ENCODE measurements at regions of chr2 and their contacts with region 1.

Region 1: GRCh38 chr2:136628490-136628889 is 136.9 kb upstream of the THSD7B start:
- DNase-seq: peak; percentile 27 to 38
- H3K4me3 ChIP-seq: no peak overlapping the region
- H3K4me3 Mint-ChIP-seq: peak overlapping the region; percentile 59
- H3K27ac Mint-ChIP-seq: peak overlapping the region; percentile 95
- H3K4me1 ChIP-seq: peaks cover 29% of the 10 kb centered on the region
- H3K4me1 Mint-ChIP-seq: peaks cover 29% of the 10 kb centered on the region
- H3K27me3 ChIP-seq: no peaks in the 10 kb centered on the region
- H3K27me3 Mint-ChIP-seq: no peaks in the 10 kb centered on the region
- CTCF ChIP-seq: no peak

Region 2: GRCh38 chr2:136517716-136518115 is 110.8 kb before region 1 on chr2:
- CTCF ChIA-PET with region 1: no interaction called
- POLR2A ChIA-PET with region 1: no interaction called
- intact Hi-C with region 1: no loop called
- DNase-seq: no peak
- H3K4me3 ChIP-seq: no peak overlapping the region
- H3K4me3 Mint-ChIP-seq: no peak overlapping the region
- H3K27ac Mint-ChIP-seq: no peak overlapping the region
- H3K4me1 ChIP-seq: peaks cover 5% of the 10 kb centered on the region; the same call in 1 of the 2 replicates
- H3K4me1 Mint-ChIP-seq: peaks cover 5% of the 10 kb centered on the region
- H3K27me3 ChIP-seq: no peaks in the 10 kb centered on the region
- H3K27me3 Mint-ChIP-seq: peaks cover 9% of the 10 kb centered on the region
- CTCF ChIP-seq: no peak

Region 3: DNA sequence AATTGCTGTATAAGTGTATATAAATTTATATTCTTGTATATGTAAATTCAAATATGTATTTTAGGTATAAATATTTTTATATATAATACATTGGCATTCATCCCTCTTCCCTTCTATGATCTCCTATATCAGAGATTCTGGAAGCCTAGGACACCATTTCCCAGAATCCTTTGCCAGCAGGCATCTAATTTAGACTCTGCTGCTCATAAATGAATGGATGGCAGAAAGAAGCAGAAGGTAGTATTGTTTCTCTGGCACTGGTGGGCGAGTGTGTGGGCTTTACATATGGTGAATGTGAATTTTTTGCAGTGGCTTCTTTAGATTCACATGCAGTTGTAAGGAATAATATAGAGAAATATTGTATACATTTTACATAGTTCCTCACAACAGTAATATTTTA is 78.3 kb before region 1 on chr2:
- CTCF ChIA-PET with region 1: no interaction called
- POLR2A ChIA-PET with region 1: no interaction called
- intact Hi-C with region 1: no loop called
- DNase-seq: no peak
- H3K4me3 ChIP-seq: no peak overlapping the region
- H3K4me3 Mint-ChIP-seq: no peak overlapping the region
- H3K27ac Mint-ChIP-seq: no peak overlapping the region
- H3K4me1 ChIP-seq: no peaks in the 10 kb centered on the region
- H3K4me1 Mint-ChIP-seq: no peaks in the 10 kb centered on the region
- H3K27me3 ChIP-seq: no peaks in the 10 kb centered on the region
- H3K27me3 Mint-ChIP-seq: peaks cover 2% of the 10 kb centered on the region
- CTCF ChIP-seq: no peak

Region 4: GRCh38 chr2:136738044-136738443 is 109.6 kb after region 1 on chr2:
- CTCF ChIA-PET with region 1: no interaction called
- POLR2A ChIA-PET with region 1: no interaction called
- intact Hi-C with region 1: loop called (anchors 5 kb)
- DNase-seq: peak in 1 of 2 experiments; percentile 7
- H3K4me3 ChIP-seq: no peak overlapping the region
- H3K4me3 Mint-ChIP-seq: peak overlapping the region; percentile 66
- H3K27ac Mint-ChIP-seq: peak overlapping the region; percentile 29
- H3K4me1 ChIP-seq: peaks cover 59% of the 10 kb centered on the region
- H3K4me1 Mint-ChIP-seq: peaks cover 24% of the 10 kb centered on the region
- H3K27me3 ChIP-seq: no peaks in the 10 kb centered on the region
- H3K27me3 Mint-ChIP-seq: no peaks in the 10 kb centered on the region
- CTCF ChIP-seq: no peak

Region 5: GRCh38 chr2:137380610-137381009 is 752.1 kb after region 1 on chr2:
- CTCF ChIA-PET with region 1: no interaction called
- POLR2A ChIA-PET with region 1: no interaction called
- intact Hi-C with region 1: no loop called
- DNase-seq: no peak
- H3K4me3 ChIP-seq: no peak overlapping the region
- H3K4me3 Mint-ChIP-seq: no peak overlapping the region
- H3K27ac Mint-ChIP-seq: no peak overlapping the region
- H3K4me1 ChIP-seq: no peaks in the 10 kb centered on the region
- H3K4me1 Mint-ChIP-seq: no peaks in the 10 kb centered on the region
- H3K27me3 ChIP-seq: no peaks in the 10 kb centered on the region
- H3K27me3 Mint-ChIP-seq: no peaks in the 10 kb centered on the region
- CTCF ChIP-seq: no peak

Measured in Caco-2 (cell line).